ENCODE measurements at regions of chr20 and their contacts with region 1.

Region 1: DNA sequence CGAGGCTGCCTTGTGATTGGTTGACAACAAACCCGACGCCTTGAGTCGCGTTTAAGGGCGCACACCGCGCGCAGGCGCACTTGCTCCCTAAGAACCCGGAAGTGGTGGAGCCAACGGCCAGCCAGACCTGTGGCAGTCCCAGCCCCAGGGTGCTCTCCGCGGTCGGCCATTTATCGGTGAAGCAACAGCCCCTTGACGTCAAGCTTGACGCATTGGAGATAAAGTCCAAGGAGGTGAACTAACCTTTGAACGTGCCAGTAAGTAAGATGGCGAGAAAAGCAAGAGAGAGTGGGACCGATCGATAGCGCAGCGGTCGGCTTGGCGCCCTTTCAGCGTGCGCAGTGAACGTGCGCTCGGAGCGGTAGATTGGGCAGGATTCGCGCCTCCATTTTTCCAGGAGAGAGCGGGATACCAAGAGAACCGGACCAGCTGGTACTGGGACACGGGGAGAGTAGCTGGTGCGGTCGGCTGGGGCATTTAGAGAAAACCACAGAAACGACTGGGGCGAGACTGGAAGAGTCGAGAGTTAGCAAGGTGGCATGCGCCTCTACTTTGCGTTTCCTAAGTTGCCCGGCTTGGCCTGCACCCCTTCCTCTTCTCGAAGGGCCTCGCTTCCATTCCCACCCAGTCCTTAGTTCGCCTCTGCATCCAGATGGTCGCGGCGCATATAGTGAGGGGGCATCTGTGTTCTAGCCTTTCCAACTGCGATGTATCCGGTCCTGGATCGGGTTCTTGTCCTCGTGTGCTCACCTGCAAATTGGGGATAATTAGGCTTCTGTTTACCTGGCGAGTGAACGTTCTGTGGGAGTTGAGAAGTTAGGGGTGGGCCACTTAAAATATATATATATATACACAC is at the start of gene CSTF1:
- DNase-seq: peak; percentile 100
- H3K4me3 Mint-ChIP-seq: no peak within 1 kb of the TSS
- H3K27ac Mint-ChIP-seq: no peak within 1 kb of the TSS
- H3K4me1 Mint-ChIP-seq: peaks cover 44% of the 10 kb centered on the region
- H3K27me3 Mint-ChIP-seq: no peaks in the 10 kb centered on the region
- total RNA-seq, gene CSTF1: 52.2 and 52.5 TPM in 2 replicates

Region 2: DNA sequence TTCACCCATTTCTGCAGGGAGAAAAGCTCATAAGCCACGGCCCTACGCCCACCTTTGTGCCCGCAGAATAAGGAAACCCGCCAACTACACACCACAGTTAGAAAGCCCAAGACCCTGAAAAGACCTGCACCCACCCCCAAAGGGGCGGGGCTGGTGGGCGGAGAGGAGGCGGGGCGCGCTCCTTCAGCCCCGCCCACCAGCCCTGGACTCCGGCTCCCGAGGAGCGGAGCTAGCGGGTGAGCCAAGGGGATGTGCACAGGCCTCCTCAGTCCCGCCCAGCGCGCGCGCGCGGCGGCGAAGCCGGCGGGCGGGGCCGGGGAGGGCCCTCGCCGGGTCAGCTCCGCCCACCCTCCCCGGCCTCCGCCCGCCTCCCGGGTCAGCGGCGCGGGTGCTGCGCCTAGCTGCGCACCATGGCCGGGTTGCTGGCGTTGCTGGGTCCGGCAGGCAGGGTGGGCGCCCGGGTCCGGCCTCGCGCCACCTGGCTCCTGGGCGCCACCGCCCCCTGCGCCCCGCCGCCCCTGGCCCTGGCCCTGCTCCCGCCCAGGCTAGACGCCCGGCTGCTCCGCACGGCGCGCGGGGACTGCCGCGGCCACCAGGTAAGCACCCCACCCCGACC is 33.8 kb before region 1 on chr20 and contains the start of gene FAM210B:
- intact Hi-C with region 1: loop called (anchors 1 kb)
- DNase-seq: peak; percentile 94
- H3K4me3 Mint-ChIP-seq: peak within 1 kb of the TSS; percentile 86
- H3K27ac Mint-ChIP-seq: peak within 1 kb of the TSS; percentile 73
- H3K4me1 Mint-ChIP-seq: peaks cover 14% of the 10 kb centered on the region
- H3K27me3 Mint-ChIP-seq: peaks cover 12% of the 10 kb centered on the region
- total RNA-seq, gene FAM210B: 5.5 and 6.0 TPM in 2 replicates

Region 3: GRCh38 chr20:56418385-56418861 is 25.9 kb after region 1 on chr20:
- intact Hi-C with region 1: loop called (anchors 2 kb)
- DNase-seq: peak; percentile 69
- H3K4me3 Mint-ChIP-seq: peak overlapping the region; percentile 53
- H3K27ac Mint-ChIP-seq: peak overlapping the region; percentile 93
- H3K4me1 Mint-ChIP-seq: peaks cover 65% of the 10 kb centered on the region
- H3K27me3 Mint-ChIP-seq: no peaks in the 10 kb centered on the region

Region 4: DNA sequence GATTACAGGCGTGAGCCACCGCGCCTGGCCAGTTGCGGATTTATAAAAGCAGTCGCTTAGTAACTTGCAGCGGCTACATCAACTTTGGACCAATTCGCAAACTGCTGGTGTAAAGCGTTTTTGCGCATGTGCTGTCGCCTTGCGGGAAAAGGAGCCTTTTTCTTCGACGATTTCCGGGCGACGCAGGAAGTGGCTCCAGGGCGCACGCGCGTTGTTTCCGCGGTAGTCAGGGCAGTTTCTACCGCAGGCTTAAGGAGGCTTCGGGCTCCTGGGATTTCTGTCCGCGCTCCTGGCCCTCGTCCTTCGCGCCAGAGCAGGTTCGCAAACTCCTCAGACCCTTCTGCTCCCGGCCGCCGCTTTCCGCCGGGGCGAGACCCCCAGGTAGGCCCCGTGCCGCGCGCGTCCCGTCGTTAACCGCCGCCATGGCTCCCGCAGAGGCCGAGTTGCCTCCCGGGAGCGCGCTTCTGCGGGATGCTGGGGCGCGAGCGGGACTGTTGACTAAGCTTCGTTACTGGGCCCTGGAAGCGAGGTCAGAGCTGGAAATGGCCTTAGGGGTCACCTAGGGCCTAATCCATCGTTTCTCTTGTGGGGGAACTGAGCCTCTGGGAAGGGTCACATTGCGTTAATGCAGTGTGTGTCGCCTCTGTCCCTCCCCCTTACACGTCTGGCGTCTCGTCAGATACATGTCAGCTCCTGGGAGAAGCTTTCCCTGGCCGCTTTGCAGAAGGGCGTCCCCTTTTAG is 958.7 kb after region 1 on chr20 and contains the start of gene RAE1:
- intact Hi-C with region 1: loop called (anchors 10 kb)
- DNase-seq: peak; percentile 98
- H3K4me3 Mint-ChIP-seq: peak within 1 kb of the TSS; percentile 95
- H3K27ac Mint-ChIP-seq: peak within 1 kb of the TSS; percentile 94
- H3K4me1 Mint-ChIP-seq: peaks cover 31% of the 10 kb centered on the region
- H3K27me3 Mint-ChIP-seq: peaks cover 6% of the 10 kb centered on the region
- total RNA-seq, gene RAE1: 58.2 and 63.4 TPM in 2 replicates

Region 5: DNA sequence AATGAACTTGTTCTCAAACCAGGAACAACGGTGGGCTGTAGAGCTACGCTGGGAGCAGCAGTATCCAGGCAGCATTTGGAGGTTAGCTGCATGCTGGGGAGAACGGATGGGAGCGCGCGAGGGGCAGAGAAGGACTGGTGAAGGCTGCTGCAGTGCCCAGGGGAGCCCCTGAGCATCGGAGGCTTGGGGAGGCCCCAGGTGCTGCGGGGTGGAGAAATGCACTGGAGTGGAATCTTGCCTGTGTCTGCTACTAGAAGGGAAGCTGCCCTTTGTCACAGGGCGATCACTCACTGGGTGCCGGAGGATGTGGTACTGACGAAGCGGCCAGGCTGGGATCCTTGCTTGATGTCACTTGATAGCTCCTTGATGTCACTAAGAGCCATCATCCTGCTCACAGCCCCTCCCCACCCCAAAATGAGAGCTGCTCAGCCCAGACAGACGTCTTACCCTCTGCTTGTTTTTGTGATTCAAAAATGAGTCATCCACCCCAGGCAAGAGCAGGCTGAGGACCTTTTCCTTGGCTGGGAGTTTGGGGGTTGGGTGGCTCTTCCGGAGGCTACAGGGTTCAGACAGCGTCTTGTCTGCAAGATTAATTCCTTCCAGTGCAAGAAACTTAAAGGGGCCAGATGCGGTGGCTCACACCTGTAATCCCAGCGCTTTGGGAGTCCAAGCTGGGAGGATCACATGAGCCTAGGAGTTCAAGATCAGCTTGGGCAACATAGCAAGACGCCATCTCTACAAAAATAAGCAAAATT is 1379.9 kb after region 1 on chr20:
- intact Hi-C with region 1: loop called (anchors 10 kb)
- DNase-seq: peak; percentile 70
- H3K4me3 Mint-ChIP-seq: no peak overlapping the region
- H3K27ac Mint-ChIP-seq: no peak overlapping the region
- H3K4me1 Mint-ChIP-seq: peaks cover 2% of the 10 kb centered on the region
- H3K27me3 Mint-ChIP-seq: peaks cover 16% of the 10 kb centered on the region

Measured in activated CD4-positive, alpha-beta T cell treated with anti-CD3 and anti-CD28 coated beads, Interleukin-2, amount 10 ng/mL, durations not matched to agents 24 days and 14 days (primary cell).